Activated CD4-positive, alpha-beta T cell treated with anti-CD3 and anti-CD28 coated beads for 36 hours (primary cell): ENCODE measurements at regions of chr22 and their contacts with region 1.

Region 1: DNA sequence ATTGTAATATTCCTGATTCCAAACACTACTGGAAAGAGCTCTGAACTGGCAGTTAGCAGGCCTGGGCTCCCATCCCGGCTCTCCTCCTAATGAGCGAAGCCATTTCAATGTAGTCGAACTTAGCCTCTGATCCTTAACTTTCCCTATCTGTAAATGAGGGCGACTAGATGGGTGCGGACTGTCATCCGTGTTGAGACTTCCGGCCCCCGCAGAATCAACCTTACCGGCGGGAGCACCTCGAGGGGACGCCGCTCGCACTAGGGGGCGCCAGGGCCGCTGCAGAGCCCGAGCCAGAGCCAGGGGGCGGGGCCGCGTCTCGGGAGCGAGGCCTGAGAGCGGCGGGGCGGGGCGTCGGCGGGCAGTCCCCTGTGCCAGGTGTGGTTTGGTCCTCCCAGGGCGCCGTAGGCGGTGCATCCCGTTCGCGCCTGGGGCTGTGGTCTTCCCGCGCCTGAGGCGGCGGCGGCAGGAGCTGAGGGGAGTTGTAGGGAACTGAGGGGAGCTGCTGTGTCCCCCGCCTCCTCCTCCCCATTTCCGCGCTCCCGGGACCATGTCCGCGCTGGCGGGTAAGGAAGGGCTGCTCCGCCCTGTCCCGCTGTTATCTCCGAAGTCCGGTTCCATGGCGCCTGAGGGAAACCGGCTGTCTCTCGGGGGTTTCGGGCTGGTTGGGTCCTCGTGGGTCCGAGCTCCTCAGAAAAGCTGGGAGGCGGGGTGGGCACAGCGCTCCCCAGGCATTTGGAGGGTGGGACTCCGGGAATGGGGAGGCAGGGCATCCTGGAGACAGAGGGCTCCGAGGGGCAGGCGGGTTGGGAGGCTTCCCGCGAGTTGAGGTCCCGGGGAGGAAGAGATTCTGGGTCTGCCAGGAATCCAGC is at the start of gene LIMK2:
- DNase-seq: peak; percentile 99
- ATAC-seq: peak; percentile 97
- H3K4me3 Mint-ChIP-seq: peak within 1 kb of the TSS; percentile 85
- H3K27ac Mint-ChIP-seq: peak within 1 kb of the TSS; percentile 92
- H3K4me1 Mint-ChIP-seq: peaks cover 45% of the 10 kb centered on the region
- H3K27me3 Mint-ChIP-seq: no peaks in the 10 kb centered on the region
- total RNA-seq, gene LIMK2: 31.8 to 34.4 TPM

Region 2: GRCh38 chr22:30742291-30743256 is 469.5 kb before region 1 on chr22:
- CTCF ChIA-PET with region 1: no interaction called
- POLR2A ChIA-PET with region 1: no interaction called
- intact Hi-C with region 1: loop called in 1 of 2 experiments (anchors 1 kb)
- DNase-seq: peak; percentile 69
- ATAC-seq: peak; percentile 61
- H3K4me3 Mint-ChIP-seq: peak overlapping the region; percentile 6
- H3K27ac Mint-ChIP-seq: peak overlapping the region; percentile 82
- H3K4me1 Mint-ChIP-seq: peaks cover 64% of the 10 kb centered on the region
- H3K27me3 Mint-ChIP-seq: peaks cover 7% of the 10 kb centered on the region

Region 3: GRCh38 chr22:31160328-31160978 is 51.6 kb before region 1 on chr22:
- CTCF ChIA-PET with region 1: interaction called, 4 read pairs
- POLR2A ChIA-PET with region 1: interaction called, 3 read pairs
- intact Hi-C with region 1: loop called (anchors 1 kb)
- DNase-seq: peak; percentile 47
- ATAC-seq: peak; percentile 45
- H3K4me3 Mint-ChIP-seq: peak overlapping the region; percentile 85
- H3K27ac Mint-ChIP-seq: peak overlapping the region; percentile 95
- H3K4me1 Mint-ChIP-seq: peaks cover 29% of the 10 kb centered on the region
- H3K27me3 Mint-ChIP-seq: no peaks in the 10 kb centered on the region

Region 4: GRCh38 chr22:31272522-31273446 is 60.7 kb after region 1 on chr22:
- CTCF ChIA-PET with region 1: interaction called, 20 read pairs
- POLR2A ChIA-PET with region 1: interaction called, 4 read pairs
- intact Hi-C with region 1: loop called (anchors 1 to 5 kb)
- DNase-seq: peak; percentile 70
- ATAC-seq: peak; percentile 84
- H3K4me3 Mint-ChIP-seq: no peak overlapping the region
- H3K27ac Mint-ChIP-seq: no peak overlapping the region
- H3K4me1 Mint-ChIP-seq: peaks cover 51% of the 10 kb centered on the region
- H3K27me3 Mint-ChIP-seq: no peaks in the 10 kb centered on the region

Region 5: GRCh38 chr22:31345331-31346254 is 133.5 kb after region 1 on chr22:
- CTCF ChIA-PET with region 1: interaction called, 3 read pairs
- POLR2A ChIA-PET with region 1: no interaction called
- intact Hi-C with region 1: loop called in 1 of 2 experiments (anchors 2 kb)
- DNase-seq: peak; percentile 93
- ATAC-seq: peak; percentile 59
- H3K4me3 Mint-ChIP-seq: peak overlapping the region; percentile 90
- H3K27ac Mint-ChIP-seq: peak overlapping the region; percentile 92
- H3K4me1 Mint-ChIP-seq: peaks cover 44% of the 10 kb centered on the region
- H3K27me3 Mint-ChIP-seq: no peaks in the 10 kb centered on the region

Region 6: DNA sequence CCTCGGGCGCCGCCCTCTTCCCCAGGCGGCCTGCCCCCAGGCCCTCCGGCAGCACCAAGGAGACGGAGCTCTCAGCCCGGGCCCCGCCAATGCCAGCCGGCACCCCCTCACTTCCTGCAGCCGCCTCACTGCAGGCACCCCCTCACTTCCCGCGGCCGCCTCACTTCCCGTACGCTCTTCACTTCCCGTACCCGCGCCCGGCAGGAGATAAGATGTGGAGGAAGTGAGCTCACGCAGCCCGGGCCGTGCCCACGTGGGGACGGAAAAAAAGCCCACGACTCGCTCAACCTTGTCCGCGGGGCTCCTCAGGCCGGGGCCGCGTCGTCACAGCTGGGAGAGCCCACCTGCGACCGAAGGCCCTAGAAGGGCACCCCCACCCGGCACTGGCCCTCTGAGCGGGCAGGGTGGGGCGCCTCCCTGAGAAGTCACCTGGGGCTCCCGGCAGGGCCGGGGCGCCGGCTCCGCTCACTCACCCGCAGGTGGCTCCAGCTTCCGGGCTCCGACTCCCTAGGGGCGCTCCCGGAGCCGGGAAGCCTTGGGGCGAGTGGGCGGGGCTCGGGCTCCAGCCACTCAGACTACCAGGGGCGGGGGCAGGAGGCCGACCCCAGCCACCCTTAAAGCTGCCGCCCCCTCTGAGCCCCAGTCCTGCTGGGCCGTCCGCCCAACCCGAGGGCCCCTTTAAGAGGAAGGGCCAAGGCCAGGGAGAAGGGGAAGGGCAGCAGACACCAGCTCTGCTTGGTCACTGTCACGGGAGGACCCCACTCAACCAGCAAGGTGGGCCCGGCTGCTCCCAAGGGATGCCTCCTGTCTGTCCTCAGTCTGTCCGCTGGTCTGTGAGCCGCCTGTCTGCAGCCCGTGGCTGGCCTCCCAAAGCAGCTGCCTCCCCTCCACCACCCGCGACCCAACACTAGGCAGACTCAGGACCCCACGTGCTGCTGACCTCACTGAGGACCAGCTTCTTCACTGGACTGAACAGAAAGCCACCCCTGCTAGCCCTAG is 418.5 kb after region 1 on chr22:
- CTCF ChIA-PET with region 1: no interaction called
- POLR2A ChIA-PET with region 1: no interaction called
- intact Hi-C with region 1: loop called in 1 of 2 experiments (anchors 2 kb)
- DNase-seq: peak; percentile 93
- ATAC-seq: peak; percentile 82
- H3K4me3 Mint-ChIP-seq: peak overlapping the region; percentile 81
- H3K27ac Mint-ChIP-seq: peak overlapping the region; percentile 89
- H3K4me1 Mint-ChIP-seq: peaks cover 60% of the 10 kb centered on the region
- H3K27me3 Mint-ChIP-seq: no peaks in the 10 kb centered on the region